ENCODE measurements at regions of chr1 and their contacts with region 1.

Region 1: DNA sequence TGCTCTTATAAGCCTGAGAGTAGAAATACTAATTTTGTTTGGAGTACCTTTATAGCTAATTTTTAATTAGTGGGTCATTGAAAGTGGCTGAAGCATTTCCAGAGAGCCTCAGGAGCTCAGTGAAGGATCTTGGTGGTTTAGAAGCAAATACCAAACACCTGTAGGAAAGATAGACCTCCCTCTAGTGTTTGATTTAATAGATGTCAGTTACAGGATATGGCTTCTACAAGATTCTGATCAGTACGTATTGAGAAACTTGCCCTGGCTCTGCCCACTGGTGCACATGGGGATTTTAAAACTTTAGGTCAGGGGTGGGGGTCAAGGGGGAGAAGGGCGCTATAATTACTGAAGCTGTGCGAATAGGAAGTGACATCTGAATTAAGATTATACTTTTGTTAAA is 122.2 kb downstream of the POU2F1 start:
- DNase-seq: no peak
- H3K4me3 ChIP-seq: no peak overlapping the region
- H3K27ac ChIP-seq: no peak overlapping the region
- H3K4me1 ChIP-seq: peaks cover 6% of the 10 kb centered on the region
- H3K27me3 ChIP-seq: no peaks in the 10 kb centered on the region
- CTCF ChIP-seq: no peak
- POLR2A ChIP-seq: no peak

Region 2: DNA sequence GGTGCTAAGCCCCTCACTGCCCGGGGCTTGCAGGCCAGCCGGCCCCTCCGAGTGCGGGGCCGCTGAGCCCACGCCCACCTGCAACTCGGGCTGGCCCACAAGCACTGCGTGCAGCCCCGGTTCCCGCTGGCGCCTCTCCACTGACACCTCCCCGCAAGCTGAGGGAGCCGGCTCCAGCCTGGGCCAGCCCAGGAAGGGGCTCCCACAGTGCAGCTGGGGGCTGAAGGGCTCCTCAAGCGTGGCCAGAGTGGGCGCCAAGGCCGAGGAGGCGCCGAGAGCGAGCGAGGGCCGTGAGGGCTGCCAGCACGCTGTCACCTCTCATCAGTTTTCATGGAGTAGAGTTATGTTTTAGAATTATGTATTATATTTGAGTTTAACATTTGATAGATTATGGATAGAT is 999.6 kb before region 1 on chr1:
- CTCF ChIA-PET with region 1: no interaction called
- POLR2A ChIA-PET with region 1: no interaction called
- dilution Hi-C with region 1: no loop called
- intact Hi-C with region 1: no loop called
- DNase-seq: no peak
- H3K4me3 ChIP-seq: no peak overlapping the region
- H3K27ac ChIP-seq: no peak overlapping the region
- H3K4me1 ChIP-seq: no peaks in the 10 kb centered on the region
- H3K27me3 ChIP-seq: no peaks in the 10 kb centered on the region
- CTCF ChIP-seq: no peak
- POLR2A ChIP-seq: no peak

Region 3: DNA sequence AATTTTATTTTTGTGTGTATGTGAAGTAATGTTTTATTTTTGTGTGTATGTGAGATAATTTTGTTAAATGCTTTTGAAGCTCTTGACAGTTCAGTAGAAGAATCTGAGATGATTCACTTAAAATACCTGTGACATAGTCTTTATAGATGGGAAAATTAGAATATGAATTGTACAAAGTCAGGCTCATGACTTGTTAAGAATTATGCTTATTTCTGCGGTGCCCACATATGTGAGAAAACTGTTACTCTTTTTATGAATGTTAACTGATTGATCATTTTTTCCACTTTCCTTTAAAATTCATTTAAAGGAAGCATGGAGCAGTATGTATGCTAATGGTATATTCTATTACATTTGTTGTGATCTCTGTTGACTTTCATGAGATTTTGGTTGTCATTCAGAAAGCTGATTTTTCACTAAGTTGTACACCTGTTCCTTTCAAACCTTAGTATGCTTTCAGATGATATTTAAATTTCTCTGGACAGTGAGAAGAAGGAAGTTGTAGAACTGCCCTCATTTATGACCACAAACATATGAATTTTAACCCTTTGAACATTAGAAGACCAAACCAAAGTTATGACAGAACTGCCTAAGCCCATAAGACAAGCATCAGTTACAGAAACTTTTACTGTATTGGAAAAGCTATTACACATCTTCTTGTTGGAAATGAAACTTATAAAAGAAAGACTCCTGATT is 12.1 kb before region 1 on chr1:
- CTCF ChIA-PET with region 1: interaction called, 4 read pairs
- POLR2A ChIA-PET with region 1: no interaction called
- dilution Hi-C with region 1: no loop called
- intact Hi-C with region 1: loop called (anchors 1 kb)
- DNase-seq: no peak
- H3K4me3 ChIP-seq: no peak overlapping the region
- H3K27ac ChIP-seq: no peak overlapping the region
- H3K4me1 ChIP-seq: no peaks in the 10 kb centered on the region
- H3K27me3 ChIP-seq: no peaks in the 10 kb centered on the region
- CTCF ChIP-seq: no peak
- POLR2A ChIP-seq: no peak

Measured in endothelial cell of umbilical vein (primary cell).